Heart right ventricle (tissue), 16 donors: ENCODE measurements at regions of chr5 and their contacts with region 1.

Region 1: GRCh38 chr5:90854169-90854568 is 295.6 kb downstream of the ADGRV1 start:
- DNase-seq: no peak
- ATAC-seq: peak in 2 of 8 donors; percentile 44 to 63
- H3K4me3 ChIP-seq: no peak overlapping the region
- H3K27ac ChIP-seq: peak overlapping the region in 1 of 10 donors; percentile 23
- H3K4me1 ChIP-seq: peaks cover 0 to 11% (median 0%) of the 10 kb centered on the region in 9 donors
- H3K27me3 ChIP-seq: no peaks in the 10 kb centered on the region
- CTCF ChIP-seq: no peak

Region 2: GRCh38 chr5:91397791-91398190 is 543.6 kb after region 1 on chr5:
- intact Hi-C with region 1: loop called in 1 of 10 experiments (anchors 10 kb)
- DNase-seq: no peak
- ATAC-seq: no peak
- H3K4me3 ChIP-seq: no peak overlapping the region
- H3K27ac ChIP-seq: no peak overlapping the region
- H3K4me1 ChIP-seq: peaks cover 0 to 7% (median 0%) of the 10 kb centered on the region in 9 donors
- H3K27me3 ChIP-seq: no peaks in the 10 kb centered on the region
- CTCF ChIP-seq: no peak